ENCODE measurements at regions of chr4 and their contacts with region 1.

Region 1: DNA sequence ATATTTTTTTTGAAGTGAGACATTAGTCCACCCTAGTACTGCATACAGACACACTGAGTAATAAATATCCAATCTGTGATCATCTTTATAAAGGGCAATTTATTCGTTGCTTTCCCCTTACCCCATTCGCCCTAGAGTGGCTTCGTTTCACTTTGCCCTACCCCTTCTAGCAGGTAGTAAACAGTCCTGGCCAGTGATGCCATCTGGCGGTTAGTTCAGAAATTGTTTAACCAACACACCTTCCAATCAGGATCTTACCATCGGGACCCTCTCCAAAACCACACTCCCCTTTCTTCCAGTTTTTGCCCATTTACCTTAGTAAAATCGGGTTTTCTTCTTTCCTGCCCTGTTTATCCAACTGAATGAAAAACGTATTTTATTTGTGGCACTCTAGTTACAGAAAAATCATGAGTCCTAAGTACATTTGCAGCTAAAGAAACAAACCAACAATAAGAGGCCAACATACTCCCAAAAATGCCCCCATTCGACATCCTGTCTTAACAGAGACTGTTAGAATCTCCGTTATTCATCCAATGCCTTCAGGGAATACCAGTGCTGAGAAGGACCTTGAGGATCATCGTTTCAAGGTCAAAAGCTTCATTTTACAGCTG is 2.2 kb downstream of the PPA2 start:
- DNase-seq: peak in 1 of 2 donors; percentile 76
- ATAC-seq: peak in 5 of 8 donors; percentile 43 to 66 (median 49)
- H3K4me3 ChIP-seq: peak overlapping the region in 8 of 10 donors; percentile 79 to 97 (median 91)
- H3K27ac ChIP-seq: peak overlapping the region in 9 of 10 donors; percentile 97 to 100 (median 98)
- H3K4me1 ChIP-seq: peaks cover 5 to 67% (median 47%) of the 10 kb centered on the region in 9 donors
- H3K27me3 ChIP-seq: no peaks in the 10 kb centered on the region
- CTCF ChIP-seq: peak; percentile 39 to 84 (median 76)

Region 2: GRCh38 chr4:105059337-105059736 is 412.3 kb before region 1 on chr4:
- intact Hi-C with region 1: no loop called
- DNase-seq: no peak
- ATAC-seq: peak in 1 of 8 donors; percentile 55
- H3K4me3 ChIP-seq: no peak overlapping the region
- H3K27ac ChIP-seq: peak overlapping the region in 2 of 10 donors; percentile 4 to 88
- H3K4me1 ChIP-seq: peaks cover 0 to 49% (median 7%) of the 10 kb centered on the region in 9 donors
- H3K27me3 ChIP-seq: no peaks in the 10 kb centered on the region
- CTCF ChIP-seq: no peak

Region 3: GRCh38 chr4:105246712-105247111 is 225.0 kb before region 1 on chr4:
- intact Hi-C with region 1: loop called in 3 of 10 experiments (anchors 10 kb)
- DNase-seq: no peak
- ATAC-seq: peak in 7 of 8 donors; percentile 33 to 72 (median 46)
- H3K4me3 ChIP-seq: no peak overlapping the region
- H3K27ac ChIP-seq: no peak overlapping the region
- H3K4me1 ChIP-seq: peaks cover 0 to 16% (median 10%) of the 10 kb centered on the region in 9 donors
- H3K27me3 ChIP-seq: no peaks in the 10 kb centered on the region
- CTCF ChIP-seq: no peak